Vagina (tissue), 2 donors: ENCODE measurements at regions of chr17 and their contacts with region 1.

Region 1: DNA sequence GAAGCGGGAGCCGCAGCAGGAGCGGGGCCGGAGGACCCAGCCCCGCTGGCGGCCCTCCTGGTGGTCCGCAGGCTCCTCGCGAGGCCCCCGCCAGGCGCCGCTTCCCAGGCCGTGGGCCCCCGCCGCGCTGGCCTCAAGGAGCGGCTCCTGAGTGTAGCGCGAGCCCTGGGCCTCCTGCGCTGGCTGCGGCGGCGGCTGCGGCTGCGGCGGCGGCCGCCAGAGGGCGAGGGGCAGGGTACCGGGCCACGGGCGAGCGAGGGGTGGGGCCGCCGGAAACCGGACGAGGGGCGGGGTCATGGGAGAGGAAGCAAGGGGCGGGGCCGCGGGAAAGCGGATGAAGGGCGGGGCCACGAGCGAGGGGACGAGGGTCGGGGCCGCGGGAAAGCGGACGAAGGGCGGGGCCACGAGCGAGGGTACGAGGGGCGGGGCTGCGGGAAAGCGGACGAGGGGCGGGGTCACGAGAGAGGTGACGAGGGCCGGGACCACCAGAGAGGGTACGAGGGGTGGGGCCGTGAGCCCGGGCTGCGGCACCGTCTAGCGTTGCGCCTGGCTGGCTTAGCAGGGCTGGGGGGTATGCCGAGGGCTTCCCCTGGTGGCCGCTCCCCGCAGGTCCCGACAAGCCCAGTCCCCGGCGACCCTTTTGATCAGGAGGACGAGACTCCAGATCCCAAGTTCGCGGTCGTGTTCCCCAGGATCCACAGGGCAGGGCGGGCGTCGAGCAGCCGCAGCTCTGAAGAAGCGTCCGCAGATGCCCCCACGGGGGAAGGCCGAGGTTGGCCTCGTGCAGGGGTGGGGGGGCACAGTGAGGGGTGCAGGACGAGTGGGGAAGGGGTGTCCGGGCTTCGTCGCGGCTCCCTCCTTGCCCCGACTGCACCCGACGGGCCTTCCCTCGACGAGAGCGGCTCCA is 1.7 kb downstream of the MYO15B start:
- DNase-seq: no peak
- H3K4me3 ChIP-seq: peak overlapping the region; percentile 58 to 71
- H3K27ac ChIP-seq: peak overlapping the region; percentile 91
- H3K4me1 ChIP-seq: peaks cover 33% of the 10 kb centered on the region
- H3K27me3 ChIP-seq: no peaks in the 10 kb centered on the region
- CTCF ChIP-seq: peak; percentile 68 to 83 (median 74)
- POLR2A ChIP-seq: peak in 1 of 2 donors; percentile 58

Region 2: GRCh38 chr17:75428543-75429469 is 160.5 kb before region 1 on chr17:
- intact Hi-C with region 1: loop called (anchors 5 kb)
- DNase-seq: no peak
- H3K4me3 ChIP-seq: no peak overlapping the region
- H3K27ac ChIP-seq: peak overlapping the region; percentile 69
- H3K4me1 ChIP-seq: peaks cover 17% of the 10 kb centered on the region
- H3K27me3 ChIP-seq: no peaks in the 10 kb centered on the region
- CTCF ChIP-seq: no peak
- POLR2A ChIP-seq: no peak

Region 3: GRCh38 chr17:75524953-75525719 is 64.1 kb before region 1 on chr17 and contains the start of gene LLGL2:
- intact Hi-C with region 1: loop called (anchors 5 kb)
- DNase-seq: no peak
- H3K4me3 ChIP-seq: peak within 1 kb of the TSS; percentile 68 to 88
- H3K27ac ChIP-seq: peak within 1 kb of the TSS; percentile 83
- H3K4me1 ChIP-seq: peaks cover 28% of the 10 kb centered on the region
- H3K27me3 ChIP-seq: no peaks in the 10 kb centered on the region
- CTCF ChIP-seq: peak in 1 of 3 experiments; percentile 29
- POLR2A ChIP-seq: no peak
- total RNA-seq, gene LLGL2: 44.9 TPM

Region 4: GRCh38 chr17:75632863-75633485 is 43.7 kb after region 1 on chr17 and contains the start of gene SMIM5:
- intact Hi-C with region 1: no loop called
- DNase-seq: peak in 1 of 2 donors; percentile 96
- H3K4me3 ChIP-seq: peak within 1 kb of the TSS; percentile 10 to 36
- H3K27ac ChIP-seq: peak within 1 kb of the TSS; percentile 89
- H3K4me1 ChIP-seq: peaks cover 25% of the 10 kb centered on the region
- H3K27me3 ChIP-seq: no peaks in the 10 kb centered on the region
- CTCF ChIP-seq: peak; percentile 86 to 94 (median 90)
- POLR2A ChIP-seq: no peak
- total RNA-seq, gene SMIM5: 2.2 TPM